Naive thymus-derived CD4-positive, alpha-beta T cell (primary cell): ENCODE measurements at regions of chr12 and their contacts with region 1.

Region 1: GRCh38 chr12:103924761-103925641 is 5.2 kb upstream of the HSP90B1 start:
- DNase-seq: peak in 1 of 9 donors; percentile 55
- ATAC-seq: no peak
- H3K4me3 ChIP-seq: no peak overlapping the region
- H3K4me3 Mint-ChIP-seq: peak overlapping the region in 1 of 10 donors; percentile 40
- H3K27ac ChIP-seq: no peak overlapping the region
- H3K27ac Mint-ChIP-seq: peak overlapping the region in 3 of 9 donors; percentile 37 to 62 (median 51)
- H3K4me1 ChIP-seq: peaks cover 10 to 13% of the 10 kb centered on the region in 2 donors
- H3K4me1 Mint-ChIP-seq: peaks cover 11 to 36% (median 17%) of the 10 kb centered on the region in 7 donors
- H3K27me3 ChIP-seq: no peaks in the 10 kb centered on the region
- H3K27me3 Mint-ChIP-seq: peaks cover 0 to 2% (median 0%) of the 10 kb centered on the region in 5 donors

Region 2: GRCh38 chr12:103877934-103878510 is 47.0 kb before region 1 on chr12:
- CTCF ChIA-PET with region 1: interaction called, 18 read pairs
- POLR2A ChIA-PET with region 1: interaction called, 23 read pairs
- intact Hi-C with region 1: loop called (anchors 1 kb)
- DNase-seq: peak in 8 of 9 donors; percentile 43 to 61 (median 54)
- ATAC-seq: peak; percentile 83
- H3K4me3 ChIP-seq: no peak overlapping the region
- H3K4me3 Mint-ChIP-seq: peak overlapping the region in 1 of 10 donors; percentile 8
- H3K27ac ChIP-seq: no peak overlapping the region
- H3K27ac Mint-ChIP-seq: peak overlapping the region in 3 of 9 donors; percentile 2 to 80 (median 23)
- H3K4me1 ChIP-seq: no peaks in the 10 kb centered on the region
- H3K4me1 Mint-ChIP-seq: peaks cover 0 to 28% (median 12%) of the 10 kb centered on the region in 7 donors
- H3K27me3 ChIP-seq: no peaks in the 10 kb centered on the region
- H3K27me3 Mint-ChIP-seq: peaks cover 0 to 5% (median 0%) of the 10 kb centered on the region in 5 donors

Region 3: DNA sequence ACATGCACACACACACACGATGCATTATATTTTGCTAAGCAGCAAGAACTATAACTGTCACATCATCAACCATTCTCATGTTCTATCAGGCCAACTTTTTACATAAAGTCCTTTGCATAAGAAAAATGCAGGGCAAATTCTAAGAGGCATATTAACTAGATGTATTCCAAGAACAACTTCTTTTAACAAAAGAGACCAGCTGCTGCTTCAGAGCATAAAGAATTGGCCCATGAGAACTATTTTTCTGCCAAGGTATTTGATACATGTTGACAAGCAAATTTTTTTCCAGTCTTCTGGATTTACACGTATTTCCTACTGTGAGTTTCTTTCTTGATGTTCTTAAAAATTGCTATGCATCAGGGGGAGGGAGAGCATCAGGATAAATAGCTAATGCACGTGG is 97.8 kb after region 1 on chr12:
- CTCF ChIA-PET with region 1: no interaction called
- POLR2A ChIA-PET with region 1: no interaction called
- intact Hi-C with region 1: no loop called
- DNase-seq: no peak
- ATAC-seq: no peak
- H3K4me3 ChIP-seq: no peak overlapping the region
- H3K4me3 Mint-ChIP-seq: no peak overlapping the region
- H3K27ac ChIP-seq: no peak overlapping the region
- H3K27ac Mint-ChIP-seq: no peak overlapping the region
- H3K4me1 ChIP-seq: no peaks in the 10 kb centered on the region
- H3K4me1 Mint-ChIP-seq: no peaks in the 10 kb centered on the region
- H3K27me3 ChIP-seq: no peaks in the 10 kb centered on the region
- H3K27me3 Mint-ChIP-seq: peaks cover 9 to 39% (median 28%) of the 10 kb centered on the region in 5 donors